ENCODE measurements at regions of chr12 and their contacts with region 1.

Region 1: GRCh38 chr12:6778574-6779550 is 6.5 kb downstream of the LAG3 start:
- DNase-seq: peak; percentile 95
- ATAC-seq: peak; percentile 59
- H3K4me3 Mint-ChIP-seq: peak overlapping the region; percentile 72
- H3K27ac Mint-ChIP-seq: peak overlapping the region; percentile 84
- H3K4me1 Mint-ChIP-seq: peaks cover 91% of the 10 kb centered on the region
- H3K27me3 Mint-ChIP-seq: peaks cover 5% of the 10 kb centered on the region

Region 2: DNA sequence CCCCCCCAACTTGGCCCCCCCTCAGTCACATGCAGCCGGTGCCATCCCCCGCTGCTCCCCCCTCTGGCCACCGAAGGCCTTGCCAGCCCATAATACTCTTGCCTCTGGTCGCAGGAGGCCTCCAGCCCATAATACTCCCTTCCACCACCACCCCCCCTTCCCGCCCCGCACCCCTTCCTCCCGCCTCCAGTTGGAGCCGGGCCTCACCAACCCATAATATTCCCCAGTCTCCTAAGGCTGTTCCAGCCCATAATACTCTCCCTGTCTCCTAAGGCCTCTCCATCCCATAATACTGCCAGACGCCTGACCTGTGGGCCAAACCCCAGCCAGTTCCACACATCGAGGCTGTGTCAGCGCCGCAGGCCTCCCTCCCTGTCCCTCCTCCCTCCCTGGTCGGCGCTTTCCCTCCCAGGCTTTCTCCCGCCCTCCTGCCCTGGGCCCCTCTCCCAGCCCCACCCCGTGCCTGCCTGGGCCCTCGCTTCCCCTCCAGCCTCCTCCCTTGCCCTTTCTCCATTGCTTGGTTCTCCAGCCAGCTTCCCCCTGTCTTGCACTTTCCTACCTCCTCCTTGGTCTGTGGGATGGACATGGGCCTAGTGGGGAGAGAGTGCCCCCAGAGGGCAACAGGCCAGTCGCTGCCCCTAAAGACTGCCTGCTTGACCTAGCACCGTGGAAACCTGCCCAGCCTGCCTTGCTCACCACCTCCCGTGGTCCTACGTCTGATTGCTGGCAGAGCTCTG is 164.9 kb before region 1 on chr12:
- CTCF ChIA-PET with region 1: interaction called, 4 read pairs
- POLR2A ChIA-PET with region 1: interaction called, 5 read pairs
- intact Hi-C with region 1: loop called in 1 of 2 experiments (anchors 5 kb)
- DNase-seq: peak; percentile 51
- ATAC-seq: peak; percentile 30
- H3K4me3 Mint-ChIP-seq: no peak overlapping the region
- H3K27ac Mint-ChIP-seq: peak overlapping the region; percentile 10
- H3K4me1 Mint-ChIP-seq: peaks cover 41% of the 10 kb centered on the region
- H3K27me3 Mint-ChIP-seq: no peaks in the 10 kb centered on the region

Region 3: GRCh38 chr12:6723607-6724396 is 55.1 kb before region 1 on chr12 and contains the start of gene COPS7A:
- CTCF ChIA-PET with region 1: interaction called, 4 read pairs
- POLR2A ChIA-PET with region 1: no interaction called
- intact Hi-C with region 1: loop called in 1 of 2 experiments (anchors 5 kb)
- DNase-seq: peak; percentile 98
- ATAC-seq: peak; percentile 96
- H3K4me3 Mint-ChIP-seq: peak within 1 kb of the TSS; percentile 80
- H3K27ac Mint-ChIP-seq: peak within 1 kb of the TSS; percentile 97
- H3K4me1 Mint-ChIP-seq: peaks cover 18% of the 10 kb centered on the region
- H3K27me3 Mint-ChIP-seq: no peaks in the 10 kb centered on the region
- total RNA-seq, gene COPS7A: 38.3 to 41.6 TPM

Region 4: GRCh38 chr12:6764011-6764828 is 14.6 kb before region 1 on chr12:
- CTCF ChIA-PET with region 1: interaction called, 19 read pairs
- POLR2A ChIA-PET with region 1: interaction called, 11 read pairs
- intact Hi-C with region 1: loop called (anchors 1 to 2 kb)
- DNase-seq: peak; percentile 68
- ATAC-seq: peak; percentile 80
- H3K4me3 Mint-ChIP-seq: peak overlapping the region; percentile 28
- H3K27ac Mint-ChIP-seq: peak overlapping the region; percentile 44
- H3K4me1 Mint-ChIP-seq: peaks cover 28% of the 10 kb centered on the region
- H3K27me3 Mint-ChIP-seq: peaks cover 33% of the 10 kb centered on the region

Region 5: GRCh38 chr12:6825398-6826124 is 46.7 kb after region 1 on chr12:
- CTCF ChIA-PET with region 1: interaction called, 14 read pairs
- POLR2A ChIA-PET with region 1: interaction called, 4 read pairs
- intact Hi-C with region 1: no loop called
- DNase-seq: peak; percentile 91
- ATAC-seq: peak; percentile 64
- H3K4me3 Mint-ChIP-seq: no peak overlapping the region
- H3K27ac Mint-ChIP-seq: peak overlapping the region; percentile 16
- H3K4me1 Mint-ChIP-seq: peaks cover 36% of the 10 kb centered on the region
- H3K27me3 Mint-ChIP-seq: peaks cover 32% of the 10 kb centered on the region